Activated CD4-positive, alpha-beta T cell treated with anti-CD3 and anti-CD28 coated beads for 36 hours (primary cell): ENCODE measurements at regions of chr3 and their contacts with region 1.

Region 1: DNA sequence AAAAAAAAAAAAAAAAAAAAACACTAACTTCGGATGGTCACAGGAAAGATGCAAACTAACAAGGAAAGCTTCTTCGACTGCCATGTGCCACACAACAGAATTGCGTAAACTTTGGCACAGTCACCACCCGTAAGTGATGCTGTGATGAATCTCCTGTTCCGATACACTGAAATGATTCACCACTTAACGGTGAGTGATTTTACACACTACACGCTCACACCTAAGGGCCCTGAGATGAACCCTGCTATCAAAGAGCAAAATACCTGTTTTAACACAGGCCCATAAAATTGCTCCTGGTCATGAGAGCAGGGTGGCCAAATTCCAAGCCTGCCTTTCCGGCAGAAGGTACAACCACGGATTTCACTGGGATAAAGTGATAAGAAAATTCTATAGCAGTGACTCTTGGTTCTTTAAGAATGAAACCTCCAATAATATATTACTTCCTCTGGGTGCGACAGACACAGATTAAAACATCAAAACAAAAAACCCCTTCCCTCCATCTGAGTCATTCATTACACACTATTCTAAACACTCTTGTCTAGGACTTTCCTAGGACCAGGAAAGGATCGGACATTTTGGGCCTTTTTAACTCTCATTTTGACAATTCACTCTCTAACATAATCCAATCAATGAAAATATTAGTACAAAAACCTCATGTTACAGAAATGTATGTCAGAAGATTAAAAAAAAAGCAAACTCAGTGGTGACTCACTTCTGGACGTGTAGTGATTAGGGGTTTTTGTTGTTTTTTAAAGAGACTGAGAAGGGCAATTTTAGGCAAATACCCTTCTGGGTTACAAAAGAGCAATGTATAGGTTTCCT is 28.3 kb downstream of the LRIG1 start:
- DNase-seq: peak; percentile 75
- ATAC-seq: peak; percentile 84
- H3K4me3 Mint-ChIP-seq: peak overlapping the region; percentile 56
- H3K27ac Mint-ChIP-seq: peak overlapping the region; percentile 92
- H3K4me1 Mint-ChIP-seq: peaks cover 67% of the 10 kb centered on the region
- H3K27me3 Mint-ChIP-seq: no peaks in the 10 kb centered on the region

Region 2: GRCh38 chr3:65963787-65964677 is 508.5 kb before region 1 on chr3:
- CTCF ChIA-PET with region 1: no interaction called
- POLR2A ChIA-PET with region 1: no interaction called
- intact Hi-C with region 1: loop called in 1 of 2 experiments (anchors 10 kb)
- DNase-seq: peak; percentile 77
- ATAC-seq: peak; percentile 94
- H3K4me3 Mint-ChIP-seq: no peak overlapping the region
- H3K27ac Mint-ChIP-seq: peak overlapping the region; percentile 77
- H3K4me1 Mint-ChIP-seq: peaks cover 14% of the 10 kb centered on the region
- H3K27me3 Mint-ChIP-seq: peaks cover 8% of the 10 kb centered on the region

Region 3: DNA sequence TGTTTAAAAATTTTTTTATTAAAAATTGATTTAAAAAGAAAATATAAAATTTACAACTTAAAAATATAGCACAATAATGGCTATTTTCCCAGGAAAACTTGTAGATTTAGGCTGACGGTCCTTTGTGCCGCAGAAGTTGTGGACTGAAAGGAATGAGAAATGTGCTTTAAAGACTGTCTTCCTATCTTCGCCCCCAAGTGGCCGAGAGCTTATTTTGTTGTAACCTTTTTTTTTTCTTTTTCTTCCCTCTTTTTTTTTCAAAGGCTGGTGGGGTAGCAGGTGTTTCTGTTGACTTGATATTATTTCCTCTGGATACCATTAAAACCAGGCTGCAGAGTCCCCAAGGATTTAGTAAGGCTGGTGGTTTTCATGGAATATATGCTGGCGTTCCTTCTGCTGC is 236.2 kb before region 1 on chr3:
- CTCF ChIA-PET with region 1: no interaction called
- POLR2A ChIA-PET with region 1: interaction called, 8 read pairs
- intact Hi-C with region 1: loop called in 1 of 2 experiments (anchors 1 kb)
- DNase-seq: no peak
- ATAC-seq: no peak
- H3K4me3 Mint-ChIP-seq: no peak overlapping the region
- H3K27ac Mint-ChIP-seq: no peak overlapping the region
- H3K4me1 Mint-ChIP-seq: peaks cover 29% of the 10 kb centered on the region
- H3K27me3 Mint-ChIP-seq: no peaks in the 10 kb centered on the region

Region 4: GRCh38 chr3:66483406-66483906 is 10.9 kb after region 1 on chr3:
- CTCF ChIA-PET with region 1: interaction called, 8 read pairs
- POLR2A ChIA-PET with region 1: interaction called, 5 read pairs
- intact Hi-C with region 1: loop called (anchors 1 kb)
- DNase-seq: peak; percentile 32
- ATAC-seq: no peak
- H3K4me3 Mint-ChIP-seq: peak overlapping the region; percentile 4
- H3K27ac Mint-ChIP-seq: peak overlapping the region; percentile 8
- H3K4me1 Mint-ChIP-seq: peaks cover 86% of the 10 kb centered on the region
- H3K27me3 Mint-ChIP-seq: no peaks in the 10 kb centered on the region

Region 5: DNA sequence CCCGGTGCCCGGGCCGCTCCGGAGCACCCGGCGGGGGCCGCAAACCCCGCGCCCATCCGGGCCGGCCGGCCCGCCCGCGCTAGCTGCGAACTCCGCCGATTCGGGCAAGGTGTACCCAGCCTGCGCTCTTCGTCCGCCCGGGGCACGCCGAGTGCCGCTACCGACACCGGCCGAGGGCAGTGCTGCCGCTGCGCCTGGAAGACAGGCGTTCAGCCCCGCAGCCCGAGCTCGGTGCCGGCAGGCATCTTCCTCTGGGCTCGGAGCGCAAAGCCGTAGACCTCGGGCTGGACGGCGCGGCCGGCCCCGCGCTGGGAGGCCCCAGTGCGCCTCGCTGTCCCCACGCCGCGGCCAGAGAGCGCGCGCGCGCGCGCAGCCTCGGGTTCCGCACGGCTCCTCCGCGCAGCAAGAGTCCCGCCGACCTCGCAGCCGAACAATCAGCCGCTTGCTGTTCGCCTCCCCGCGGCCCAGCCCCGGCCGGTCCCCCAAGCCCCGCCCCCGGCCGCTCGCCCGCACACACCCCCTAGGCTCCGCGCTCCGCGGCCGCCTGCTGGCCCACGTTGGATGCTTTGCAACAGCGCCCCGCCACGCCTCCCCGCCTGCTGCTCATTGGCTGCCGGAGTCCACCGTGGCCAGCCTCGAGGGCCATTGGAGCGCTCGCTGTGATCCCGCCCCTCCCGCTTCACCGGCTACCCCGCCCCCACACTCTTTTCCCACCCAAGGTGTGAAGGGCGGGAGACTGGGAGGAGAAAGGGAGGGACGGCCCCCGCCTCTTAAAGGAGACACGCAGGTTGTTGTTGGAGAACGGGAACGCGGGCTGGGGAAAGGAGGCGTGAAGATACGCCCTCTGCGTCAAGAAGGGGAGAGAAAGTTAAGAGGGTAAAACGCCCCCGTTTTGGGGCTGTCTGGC is 28.3 kb after region 1 on chr3 and contains the start of gene LRIG1:
- CTCF ChIA-PET with region 1: interaction called, 4 read pairs
- POLR2A ChIA-PET with region 1: interaction called, 3 read pairs
- intact Hi-C with region 1: loop called (anchors 1 kb)
- DNase-seq: peak; percentile 99
- ATAC-seq: peak; percentile 97
- H3K4me3 Mint-ChIP-seq: peak within 1 kb of the TSS; percentile 96
- H3K27ac Mint-ChIP-seq: peak within 1 kb of the TSS; percentile 87
- H3K4me1 Mint-ChIP-seq: peaks cover 52% of the 10 kb centered on the region
- H3K27me3 Mint-ChIP-seq: peaks cover 9% of the 10 kb centered on the region
- total RNA-seq, gene LRIG1: 19.1 to 22.7 TPM

Region 6: DNA sequence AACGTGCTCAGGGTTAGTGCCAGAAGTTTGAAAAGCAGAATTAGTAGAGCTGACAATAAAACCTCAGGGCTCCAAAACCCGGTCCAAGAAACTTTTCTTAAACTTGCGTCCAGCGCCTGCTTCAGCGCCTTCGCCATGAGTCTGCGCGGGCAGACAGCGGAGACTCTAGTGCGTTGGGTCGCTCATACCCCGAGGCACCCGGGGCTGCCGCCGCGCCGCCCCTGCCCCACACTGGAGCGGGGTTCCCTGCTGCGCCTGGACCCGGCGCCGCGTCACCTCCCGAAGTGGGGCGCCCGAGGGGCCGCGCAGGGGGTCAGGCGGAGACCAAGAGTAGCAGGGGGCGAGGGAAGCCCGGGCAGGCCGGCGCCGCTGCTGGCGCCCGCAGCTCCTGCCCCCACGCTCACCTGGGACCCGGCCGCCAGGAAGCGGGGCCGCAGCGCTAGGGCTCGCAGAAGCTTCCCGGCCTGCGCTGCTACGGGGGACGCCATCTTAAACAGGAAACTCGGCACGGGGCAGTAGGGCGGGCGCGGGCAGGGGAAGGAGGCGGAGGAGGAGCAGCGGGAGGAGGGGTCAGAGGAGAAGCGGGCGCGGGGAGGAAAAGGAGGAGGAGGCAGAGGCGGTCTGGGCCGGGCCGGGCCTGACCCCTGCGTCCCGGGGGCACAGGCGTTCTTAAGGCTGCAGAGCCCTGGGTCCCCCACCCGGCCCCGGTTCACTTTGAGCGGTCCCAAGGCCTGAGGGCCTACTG is 1181.7 kb after region 1 on chr3 and contains the start of gene SUCLG2:
- CTCF ChIA-PET with region 1: no interaction called
- POLR2A ChIA-PET with region 1: no interaction called
- intact Hi-C with region 1: loop called in 1 of 2 experiments (anchors 10 kb)
- DNase-seq: peak; percentile 91
- ATAC-seq: peak; percentile 77
- H3K4me3 Mint-ChIP-seq: peak within 1 kb of the TSS; percentile 74
- H3K27ac Mint-ChIP-seq: peak within 1 kb of the TSS; percentile 91
- H3K4me1 Mint-ChIP-seq: peaks cover 59% of the 10 kb centered on the region
- H3K27me3 Mint-ChIP-seq: no peaks in the 10 kb centered on the region
- total RNA-seq, gene SUCLG2: 58.2 to 61.1 TPM